Dorsolateral prefrontal cortex (tissue), 120 donors: ENCODE measurements at regions of chr18 and their contacts with region 1.

Region 1: GRCh38 chr18:31977270-31977872 is 34.4 kb upstream of the TRAPPC8 start:
- DNase-seq: peak in 2 of 10 donors; percentile 13 to 23
- H3K4me3 ChIP-seq: peak overlapping the region in 1 of 59 donors; percentile 20
- H3K27ac ChIP-seq: no peak overlapping the region
- H3K27me3 ChIP-seq: no peaks in the 10 kb centered on the region
- CTCF ChIP-seq: peak; percentile 57 to 87 (median 72)

Region 2: GRCh38 chr18:31555971-31556747 is 421.2 kb before region 1 on chr18:
- intact Hi-C with region 1: loop called in 1 of 2 experiments (anchors 10 kb)
- DNase-seq: peak in 2 of 10 donors; percentile 37 to 45
- H3K4me3 ChIP-seq: no peak overlapping the region
- H3K27ac ChIP-seq: no peak overlapping the region
- H3K27me3 ChIP-seq: peaks cover 0 to 5% (median 0%) of the 10 kb centered on the region in 45 donors
- CTCF ChIP-seq: peak; percentile 73 to 98 (median 88)

Region 3: DNA sequence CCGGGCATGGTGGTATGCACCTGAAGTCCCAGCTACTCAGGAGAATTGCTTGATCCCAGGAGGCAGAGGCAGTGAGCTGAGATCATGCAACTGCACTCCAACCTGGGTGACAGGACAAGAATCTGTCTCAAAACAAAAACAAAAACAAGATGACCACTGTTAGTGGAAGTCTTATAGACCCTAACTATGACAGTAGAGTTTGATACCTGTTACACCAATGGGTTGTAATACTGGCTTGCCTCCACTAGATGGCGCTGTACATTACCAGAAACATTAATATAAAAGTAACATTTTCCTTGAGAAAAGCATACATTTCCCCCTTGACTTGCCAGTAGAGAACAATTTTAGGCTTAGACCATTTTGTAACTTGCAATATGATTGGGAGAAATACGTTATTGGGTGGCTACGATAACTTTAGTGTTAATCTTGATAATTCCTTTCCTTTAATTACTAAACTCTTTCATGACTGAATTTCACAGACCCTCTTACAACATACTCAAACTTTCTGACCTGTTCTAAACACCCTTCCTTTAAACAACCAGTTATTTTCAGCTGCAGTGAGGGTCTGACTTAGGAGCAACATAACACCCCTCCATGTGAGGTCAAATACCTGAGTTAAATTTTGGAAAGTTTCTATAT is 236.2 kb before region 1 on chr18:
- intact Hi-C with region 1: loop called in 1 of 2 experiments (anchors 2 kb)
- DNase-seq: peak in 4 of 10 donors; percentile 19 to 62 (median 38)
- H3K4me3 ChIP-seq: no peak overlapping the region
- H3K27ac ChIP-seq: no peak overlapping the region
- H3K27me3 ChIP-seq: no peaks in the 10 kb centered on the region
- CTCF ChIP-seq: peak; percentile 69 to 96 (median 87)

Region 4: DNA sequence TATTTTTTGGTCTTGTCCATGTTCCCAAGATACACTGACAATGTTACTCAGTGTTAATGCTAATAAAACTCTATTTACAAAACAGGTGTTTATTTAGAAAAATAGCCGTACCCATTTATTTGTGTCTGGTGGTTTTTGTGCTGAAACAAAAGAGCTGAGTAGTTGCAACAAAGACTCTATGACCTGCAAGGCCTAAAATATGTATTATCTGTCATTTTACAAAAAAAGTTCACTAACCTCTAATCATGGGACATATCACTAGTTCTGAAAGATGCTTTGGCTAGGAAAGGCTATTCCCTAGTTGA is 157.5 kb before region 1 on chr18:
- intact Hi-C with region 1: loop called in 1 of 2 experiments (anchors 10 kb)
- DNase-seq: no peak
- H3K4me3 ChIP-seq: no peak overlapping the region
- H3K27ac ChIP-seq: no peak overlapping the region
- H3K27me3 ChIP-seq: no peaks in the 10 kb centered on the region
- CTCF ChIP-seq: peak in 8 of 56 donors; percentile 4 to 43 (median 20)